GM12878 (cell line): ENCODE measurements at regions of chr4 and their contacts with region 1.

Region 1: DNA sequence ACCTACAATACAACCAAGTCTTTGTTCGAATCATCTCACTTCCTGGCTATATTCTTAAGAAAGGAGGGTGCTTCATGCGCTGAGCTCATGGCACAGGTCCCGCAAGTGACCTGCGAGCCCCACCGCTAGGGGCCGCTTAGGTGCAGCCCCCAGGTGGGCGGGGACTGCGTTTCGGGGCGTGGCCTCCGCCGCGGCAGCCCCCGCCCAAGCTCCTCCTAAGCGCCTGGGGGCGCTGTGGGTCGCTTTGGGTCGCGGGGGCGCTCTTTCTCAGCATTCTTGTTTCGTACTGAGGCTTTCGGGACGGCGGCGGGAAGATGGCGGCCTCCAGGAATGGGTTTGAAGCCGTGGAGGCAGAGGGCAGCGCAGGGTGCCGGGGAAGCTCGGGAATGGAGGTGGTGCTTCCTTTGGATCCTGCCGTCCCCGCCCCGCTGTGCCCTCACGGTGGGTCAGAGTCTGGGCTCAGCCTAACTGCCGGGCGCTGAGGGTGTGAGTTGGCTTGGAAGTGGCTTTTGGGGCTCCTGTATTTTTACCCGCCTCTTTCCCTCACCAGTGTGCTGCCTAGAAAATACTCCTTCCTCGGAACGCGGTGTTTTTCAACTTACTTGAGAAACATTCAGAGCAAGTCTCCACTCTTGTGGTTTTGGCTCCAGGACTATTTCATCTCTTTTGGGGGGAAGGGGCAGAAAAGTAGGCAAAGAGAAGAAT is at the start of gene ZCCHC4:
- DNase-seq: peak; percentile 67
- ATAC-seq: peak; percentile 95
- H3K4me3 ChIP-seq: peak within 1 kb of the TSS; percentile 98
- H3K27ac ChIP-seq: peak within 1 kb of the TSS; percentile 72
- H3K4me1 ChIP-seq: peaks cover 24% of the 10 kb centered on the region
- H3K27me3 ChIP-seq: no peaks in the 10 kb centered on the region
- CTCF ChIP-seq: peak; percentile 99 to 100 (median 100); a peak in 5 of 6 replicates
- EP300 ChIP-seq: no peak
- POLR2A ChIP-seq: peak; percentile 94
- RAD21 ChIP-seq: peak; percentile 35; the same call in 1 of the 2 replicates
- polyA plus RNA-seq, gene ZCCHC4: 3.2 to 4.5 TPM

Region 2: DNA sequence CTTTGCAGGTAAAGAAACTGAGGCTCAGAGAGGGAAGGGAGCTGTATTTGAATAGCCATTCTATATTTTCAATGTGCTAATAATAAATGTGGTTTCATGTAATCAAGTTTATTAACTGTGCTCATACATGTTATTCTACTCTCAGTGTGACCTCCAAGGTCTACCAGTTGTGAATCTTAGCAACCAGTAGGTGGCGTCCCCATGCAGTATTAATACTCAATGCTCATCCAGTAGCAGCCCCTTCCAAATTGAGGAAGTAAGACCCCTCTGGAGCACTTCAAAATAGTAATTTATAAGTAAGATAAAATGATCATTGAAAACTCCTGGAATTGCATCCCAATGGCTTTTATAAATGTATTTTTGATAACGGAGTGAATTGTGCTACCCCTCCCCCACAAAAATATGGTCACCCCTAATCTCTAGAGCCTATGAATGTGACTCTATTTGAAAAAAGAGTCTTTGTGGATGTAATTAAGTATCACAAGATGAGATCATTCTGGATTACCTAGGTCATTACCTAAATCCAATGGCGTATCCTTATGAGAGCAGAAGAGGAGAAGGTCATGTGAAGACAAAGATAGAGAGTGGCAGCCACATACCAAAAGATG is 132.0 kb before region 1 on chr4:
- CTCF ChIA-PET with region 1: interaction called, 6 read pairs
- POLR2A ChIA-PET with region 1: no interaction called
- RAD21 ChIA-PET with region 1: interaction called, 5 read pairs
- SMC1A ChIA-PET with region 1: no interaction called
- in situ Hi-C with region 1: no loop called
- intact Hi-C with region 1: loop called (anchors 5 kb)
- DNase-seq: no peak
- ATAC-seq: peak; percentile 99
- H3K4me3 ChIP-seq: no peak overlapping the region
- H3K27ac ChIP-seq: no peak overlapping the region
- H3K4me1 ChIP-seq: no peaks in the 10 kb centered on the region
- H3K27me3 ChIP-seq: no peaks in the 10 kb centered on the region
- CTCF ChIP-seq: peak; percentile 61 to 75 (median 65)
- EP300 ChIP-seq: no peak
- POLR2A ChIP-seq: no peak
- RAD21 ChIP-seq: peak; percentile 69

Region 3: DNA sequence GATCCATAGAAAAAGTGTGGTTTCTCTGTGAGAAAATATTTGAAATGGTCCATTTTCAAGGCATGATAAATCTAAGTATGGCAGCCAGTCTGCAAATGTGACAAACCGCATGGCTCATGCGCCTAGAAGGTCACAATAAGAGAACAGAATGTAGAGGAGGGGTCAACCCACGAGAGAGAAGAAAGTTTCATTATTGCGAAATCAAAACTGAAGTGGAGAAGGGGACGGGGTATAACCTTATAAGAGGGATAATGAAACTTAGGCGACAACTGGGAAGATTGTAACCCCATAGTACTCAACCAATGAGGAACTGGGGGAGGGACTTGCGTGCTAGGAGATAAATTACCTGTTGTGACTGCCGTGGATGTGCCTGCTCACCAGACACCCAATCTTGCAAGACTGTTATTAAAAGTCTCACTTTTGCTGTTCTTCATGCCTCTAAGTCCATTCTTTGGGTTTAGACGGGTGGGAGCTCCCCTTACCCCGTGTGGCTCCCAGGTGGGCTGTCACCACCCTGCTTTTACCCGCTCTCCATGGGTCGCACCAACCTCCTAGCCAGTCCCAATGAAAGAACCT is 21.4 kb before region 1 on chr4:
- CTCF ChIA-PET with region 1: interaction called, 18 read pairs
- POLR2A ChIA-PET with region 1: no interaction called
- RAD21 ChIA-PET with region 1: interaction called, 3 read pairs
- SMC1A ChIA-PET with region 1: no interaction called
- in situ Hi-C with region 1: no loop called
- intact Hi-C with region 1: no loop called
- DNase-seq: no peak
- ATAC-seq: no peak
- H3K4me3 ChIP-seq: no peak overlapping the region
- H3K27ac ChIP-seq: no peak overlapping the region
- H3K4me1 ChIP-seq: no peaks in the 10 kb centered on the region
- H3K27me3 ChIP-seq: no peaks in the 10 kb centered on the region
- CTCF ChIP-seq: no peak
- EP300 ChIP-seq: no peak
- POLR2A ChIP-seq: no peak
- RAD21 ChIP-seq: no peak

Region 4: GRCh38 chr4:25330905-25331808 is 18.5 kb after region 1 on chr4:
- CTCF ChIA-PET with region 1: interaction called, 22 read pairs
- POLR2A ChIA-PET with region 1: interaction called, 13 read pairs
- RAD21 ChIA-PET with region 1: interaction called, 3 read pairs
- SMC1A ChIA-PET with region 1: interaction called, 8 read pairs
- in situ Hi-C with region 1: no loop called
- intact Hi-C with region 1: no loop called
- DNase-seq: no peak
- ATAC-seq: peak; percentile 91
- H3K4me3 ChIP-seq: peak overlapping the region; percentile 63
- H3K27ac ChIP-seq: peak overlapping the region; percentile 68
- H3K4me1 ChIP-seq: peaks cover 4% of the 10 kb centered on the region
- H3K27me3 ChIP-seq: no peaks in the 10 kb centered on the region
- CTCF ChIP-seq: no peak
- EP300 ChIP-seq: no peak
- POLR2A ChIP-seq: no peak
- RAD21 ChIP-seq: no peak

Region 5: GRCh38 chr4:25351777-25352416 is 39.2 kb after region 1 on chr4:
- CTCF ChIA-PET with region 1: interaction called, 18 read pairs
- POLR2A ChIA-PET with region 1: interaction called, 4 read pairs
- RAD21 ChIA-PET with region 1: interaction called, 7 read pairs
- SMC1A ChIA-PET with region 1: no interaction called
- in situ Hi-C with region 1: no loop called
- intact Hi-C with region 1: no loop called
- DNase-seq: no peak
- ATAC-seq: no peak
- H3K4me3 ChIP-seq: no peak overlapping the region
- H3K27ac ChIP-seq: no peak overlapping the region
- H3K4me1 ChIP-seq: no peaks in the 10 kb centered on the region
- H3K27me3 ChIP-seq: no peaks in the 10 kb centered on the region
- CTCF ChIP-seq: no peak
- EP300 ChIP-seq: no peak
- POLR2A ChIP-seq: no peak
- RAD21 ChIP-seq: no peak